GM12878 (cell line): ENCODE measurements at regions of chr7 and their contacts with region 1.

Region 1: DNA sequence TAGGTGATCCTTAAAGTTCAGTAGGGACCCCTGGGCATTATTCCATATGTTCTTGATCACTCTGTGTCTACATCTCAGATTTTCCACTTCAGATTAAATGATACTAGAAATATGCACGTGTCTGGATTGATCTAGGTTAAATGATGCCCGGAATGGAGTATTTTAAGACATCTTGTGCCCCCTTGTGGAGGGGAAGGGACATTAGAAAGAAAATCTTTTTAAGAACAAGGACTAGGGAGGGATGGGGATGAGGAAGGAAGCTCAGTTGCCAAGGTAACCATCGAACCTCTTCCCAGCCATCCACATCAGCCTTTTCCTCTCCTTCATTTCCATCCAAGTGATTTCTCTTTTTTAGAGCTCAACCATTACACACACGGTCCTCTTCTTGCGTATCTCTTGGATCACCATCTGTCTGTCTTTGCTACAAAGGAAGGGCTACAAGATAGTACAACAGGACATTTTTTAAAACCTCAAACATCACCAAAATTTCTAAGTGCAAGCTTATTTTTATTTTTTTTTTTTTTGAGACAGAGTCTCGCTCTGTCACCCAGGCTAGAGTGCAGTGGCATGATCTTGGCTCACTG is 40.5 kb downstream of the PRSS2 start:
- DNase-seq: no peak
- ATAC-seq: peak; percentile 1; the same call in 2 of the 3 replicates
- H3K4me3 ChIP-seq: no peak overlapping the region
- H3K27ac ChIP-seq: peak overlapping the region; percentile 24; the same call in 1 of the 2 replicates
- H3K4me1 ChIP-seq: peaks cover 46% of the 10 kb centered on the region
- H3K27me3 ChIP-seq: no peaks in the 10 kb centered on the region
- CTCF ChIP-seq: peak; percentile 55 to 73 (median 65)
- EP300 ChIP-seq: no peak
- POLR2A ChIP-seq: no peak
- RAD21 ChIP-seq: peak; percentile 94

Region 2: GRCh38 chr7:142603870-142604448 is 207.3 kb before region 1 on chr7:
- CTCF ChIA-PET with region 1: interaction called, 23 read pairs
- POLR2A ChIA-PET with region 1: no interaction called
- RAD21 ChIA-PET with region 1: interaction called, 14 read pairs
- SMC1A ChIA-PET with region 1: interaction called, 13 read pairs
- in situ Hi-C with region 1: no loop called
- intact Hi-C with region 1: no loop called
- DNase-seq: no peak
- ATAC-seq: peak; percentile 74
- H3K4me3 ChIP-seq: no peak overlapping the region
- H3K27ac ChIP-seq: no peak overlapping the region
- H3K4me1 ChIP-seq: no peaks in the 10 kb centered on the region
- H3K27me3 ChIP-seq: no peaks in the 10 kb centered on the region
- CTCF ChIP-seq: peak; percentile 74 to 81 (median 81)
- EP300 ChIP-seq: no peak
- POLR2A ChIP-seq: no peak
- RAD21 ChIP-seq: peak; percentile 82

Region 3: DNA sequence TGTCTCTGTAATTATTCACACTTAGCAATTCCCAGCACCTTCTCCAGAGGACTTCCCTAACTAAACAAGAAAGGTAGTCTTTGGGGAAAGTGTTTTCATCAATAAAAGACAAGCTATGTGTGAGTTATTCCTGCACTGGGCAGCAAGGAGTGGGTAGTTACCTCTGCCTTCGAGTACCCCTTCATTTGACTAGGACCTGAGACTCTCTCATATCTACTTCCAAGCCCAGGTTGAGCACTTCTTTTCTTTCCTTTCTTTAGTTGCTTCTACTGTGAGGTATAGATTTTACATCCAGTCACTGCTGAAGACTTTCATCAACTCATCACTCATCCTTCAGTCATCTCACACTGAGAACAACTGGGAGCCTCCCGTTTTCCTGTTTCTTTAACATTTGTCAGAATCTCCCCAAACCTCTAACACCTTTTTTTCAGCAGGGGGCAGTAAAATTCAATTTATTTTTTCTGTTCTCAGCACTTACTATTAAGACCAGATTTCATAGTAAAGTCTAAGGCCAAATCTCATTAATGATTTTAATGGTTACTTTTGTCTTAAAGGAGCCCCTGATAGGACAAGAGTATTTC is 142.1 kb before region 1 on chr7:
- CTCF ChIA-PET with region 1: interaction called, 66 read pairs
- POLR2A ChIA-PET with region 1: no interaction called
- RAD21 ChIA-PET with region 1: interaction called, 36 read pairs
- SMC1A ChIA-PET with region 1: interaction called, 28 read pairs
- in situ Hi-C with region 1: loop called (anchors 5 kb)
- intact Hi-C with region 1: loop called (anchors 1 kb)
- DNase-seq: no peak
- ATAC-seq: peak; percentile 78
- H3K4me3 ChIP-seq: no peak overlapping the region
- H3K27ac ChIP-seq: no peak overlapping the region
- H3K4me1 ChIP-seq: peaks cover 4% of the 10 kb centered on the region; the same call in 1 of the 2 replicates
- H3K27me3 ChIP-seq: no peaks in the 10 kb centered on the region
- CTCF ChIP-seq: peak; percentile 35 to 51 (median 41); a peak in 4 of 6 replicates
- EP300 ChIP-seq: no peak
- POLR2A ChIP-seq: no peak
- RAD21 ChIP-seq: peak; percentile 65

Region 4: DNA sequence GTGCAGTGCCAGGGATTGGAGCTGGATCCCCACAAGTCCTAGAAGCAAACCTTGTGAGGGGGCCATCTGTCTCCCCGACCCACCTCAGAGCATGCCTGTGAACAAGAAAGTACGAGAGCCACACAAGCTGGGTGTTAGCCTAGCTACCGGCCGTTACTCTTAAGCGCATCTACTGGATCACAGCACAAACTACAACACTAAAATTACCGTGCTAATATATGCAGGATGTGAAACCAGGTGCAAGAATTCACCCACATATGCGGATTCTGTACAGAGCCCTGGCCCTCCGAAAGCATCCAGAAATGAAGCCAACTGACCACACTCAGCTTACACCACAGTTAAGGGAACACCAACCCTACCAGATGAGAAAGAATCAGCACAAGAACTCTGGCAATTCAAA is 78.0 kb before region 1 on chr7:
- CTCF ChIA-PET with region 1: interaction called, 12 read pairs
- POLR2A ChIA-PET with region 1: no interaction called
- RAD21 ChIA-PET with region 1: no interaction called
- SMC1A ChIA-PET with region 1: interaction called, 4 read pairs
- in situ Hi-C with region 1: no loop called
- intact Hi-C with region 1: no loop called
- DNase-seq: no peak
- ATAC-seq: no peak
- H3K4me3 ChIP-seq: no peak overlapping the region
- H3K27ac ChIP-seq: no peak overlapping the region
- H3K4me1 ChIP-seq: no peaks in the 10 kb centered on the region
- H3K27me3 ChIP-seq: no peaks in the 10 kb centered on the region
- CTCF ChIP-seq: no peak
- EP300 ChIP-seq: no peak
- POLR2A ChIP-seq: no peak
- RAD21 ChIP-seq: no peak

Region 5: GRCh38 chr7:142796608-142797385 is 14.4 kb before region 1 on chr7:
- CTCF ChIA-PET with region 1: interaction called, 1,055 read pairs
- POLR2A ChIA-PET with region 1: interaction called, 325 read pairs
- RAD21 ChIA-PET with region 1: interaction called, 813 read pairs
- SMC1A ChIA-PET with region 1: interaction called, 786 read pairs
- in situ Hi-C with region 1: no loop called
- intact Hi-C with region 1: loop called (anchors 1 kb)
- DNase-seq: no peak
- ATAC-seq: peak; percentile 66
- H3K4me3 ChIP-seq: peak overlapping the region; percentile 71
- H3K27ac ChIP-seq: peak overlapping the region; percentile 62
- H3K4me1 ChIP-seq: peaks cover 6% of the 10 kb centered on the region
- H3K27me3 ChIP-seq: no peaks in the 10 kb centered on the region
- CTCF ChIP-seq: no peak
- EP300 ChIP-seq: no peak
- POLR2A ChIP-seq: no peak; the same call in 1 of the 2 replicates
- RAD21 ChIP-seq: no peak

Region 6: GRCh38 chr7:142833174-142834048 is 22.2 kb after region 1 on chr7:
- CTCF ChIA-PET with region 1: interaction called, 72 read pairs
- POLR2A ChIA-PET with region 1: interaction called, 9 read pairs
- RAD21 ChIA-PET with region 1: interaction called, 73 read pairs
- SMC1A ChIA-PET with region 1: interaction called, 62 read pairs
- in situ Hi-C with region 1: no loop called
- intact Hi-C with region 1: loop called (anchors 2 kb)
- DNase-seq: no peak
- ATAC-seq: peak; percentile 89
- H3K4me3 ChIP-seq: no peak overlapping the region
- H3K27ac ChIP-seq: no peak overlapping the region
- H3K4me1 ChIP-seq: peaks cover 19% of the 10 kb centered on the region
- H3K27me3 ChIP-seq: no peaks in the 10 kb centered on the region
- CTCF ChIP-seq: no peak
- EP300 ChIP-seq: peak; percentile 49 to 60; a peak in 3 of 4 replicates
- POLR2A ChIP-seq: no peak
- RAD21 ChIP-seq: no peak

Region 7: GRCh38 chr7:143008007-143008901 is 197.0 kb after region 1 on chr7:
- CTCF ChIA-PET with region 1: interaction called, 12 read pairs
- POLR2A ChIA-PET with region 1: no interaction called
- RAD21 ChIA-PET with region 1: interaction called, 5 read pairs
- SMC1A ChIA-PET with region 1: interaction called, 11 read pairs
- in situ Hi-C with region 1: no loop called
- intact Hi-C with region 1: no loop called
- DNase-seq: peak; percentile 9
- ATAC-seq: peak; percentile 95
- H3K4me3 ChIP-seq: no peak overlapping the region
- H3K27ac ChIP-seq: no peak overlapping the region
- H3K4me1 ChIP-seq: no peaks in the 10 kb centered on the region
- H3K27me3 ChIP-seq: no peaks in the 10 kb centered on the region; a peak in 1 of 4 replicates
- CTCF ChIP-seq: peak; percentile 92 to 97 (median 94)
- EP300 ChIP-seq: no peak
- POLR2A ChIP-seq: no peak
- RAD21 ChIP-seq: peak; percentile 97